PC-9 (cell line): ENCODE measurements at regions of chr11 and their contacts with region 1.

Region 1: GRCh38 chr11:65117216-65118096 is at the start of gene ZNHIT2:
- DNase-seq: peak; percentile 96 to 100
- H3K4me3 ChIP-seq: peak within 1 kb of the TSS; percentile 100
- H3K27ac ChIP-seq: peak within 1 kb of the TSS; percentile 86
- H3K4me1 ChIP-seq: peaks cover 38% of the 10 kb centered on the region
- H3K27me3 ChIP-seq: no peaks in the 10 kb centered on the region
- CTCF ChIP-seq: peak; percentile 98
- total RNA-seq, gene ZNHIT2: 13.7 and 22.3 TPM in 2 replicates

Region 2: DNA sequence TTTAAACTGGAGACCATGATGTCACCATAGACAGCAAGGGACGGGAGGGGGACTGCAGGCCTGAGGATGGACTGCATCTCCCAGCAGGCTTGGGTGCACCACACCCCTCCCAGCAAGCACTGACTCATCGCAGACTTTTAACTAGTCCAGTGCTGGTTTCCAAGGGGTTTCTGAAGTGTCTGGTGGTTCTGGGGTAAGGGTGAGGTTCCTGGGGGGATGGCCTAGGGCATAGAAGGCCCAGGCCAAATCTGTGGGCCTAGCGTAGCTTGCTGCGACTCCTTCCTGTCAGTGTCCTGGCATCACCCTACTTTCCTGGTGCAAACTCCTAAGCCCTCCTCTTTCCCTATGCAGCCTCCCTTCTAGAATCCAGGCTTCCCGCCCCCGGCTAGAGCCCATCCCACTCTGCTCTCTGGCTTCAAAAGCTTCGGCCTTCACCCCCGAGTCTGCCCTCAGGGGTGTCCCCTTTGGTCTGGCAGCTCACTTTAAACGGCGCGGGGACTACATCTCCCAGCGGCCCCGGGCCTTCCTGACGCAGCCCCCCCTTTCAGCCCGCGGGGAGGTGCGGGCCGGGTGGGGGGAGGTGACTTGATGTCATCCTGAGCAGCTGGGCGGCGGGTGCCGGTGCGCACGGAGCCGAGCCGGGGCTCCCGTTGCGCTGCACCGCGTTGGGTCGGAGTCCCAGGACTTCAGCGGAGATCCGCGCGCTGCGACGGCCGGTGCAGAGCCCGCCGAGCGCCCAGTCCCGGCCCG is 193.2 kb before region 1 on chr11 and contains the start of gene PPP2R5B:
- CTCF ChIA-PET with region 1: no interaction called
- POLR2A ChIA-PET with region 1: no interaction called
- intact Hi-C with region 1: loop called (anchors 2 kb)
- DNase-seq: peak; percentile 91
- H3K4me3 ChIP-seq: peak within 1 kb of the TSS; percentile 66
- H3K27ac ChIP-seq: peak within 1 kb of the TSS; percentile 58
- H3K4me1 ChIP-seq: peaks cover 11% of the 10 kb centered on the region
- H3K27me3 ChIP-seq: no peaks in the 10 kb centered on the region
- CTCF ChIP-seq: no peak
- total RNA-seq, gene PPP2R5B: 13.7 and 13.9 TPM in 2 replicates

Region 3: GRCh38 chr11:64971421-64972233 is 145.8 kb before region 1 on chr11 and contains the start of gene MAJIN:
- CTCF ChIA-PET with region 1: interaction called, 13 read pairs
- POLR2A ChIA-PET with region 1: no interaction called
- intact Hi-C with region 1: no loop called
- DNase-seq: peak; percentile 66 to 93
- H3K4me3 ChIP-seq: peak within 1 kb of the TSS; percentile 52; the same call in 1 of the 2 replicates
- H3K27ac ChIP-seq: peak within 1 kb of the TSS; percentile 95
- H3K4me1 ChIP-seq: peaks cover 26% of the 10 kb centered on the region
- H3K27me3 ChIP-seq: 0 out of 2 replicates have a peak, but pooled peaks cover under 1% of the 10 kb centered on the region
- CTCF ChIP-seq: no peak
- total RNA-seq, gene MAJIN: 4.5 and 7.1 TPM in 2 replicates

Region 4: GRCh38 chr11:65013692-65014145 is 103.7 kb before region 1 on chr11:
- CTCF ChIA-PET with region 1: no interaction called
- POLR2A ChIA-PET with region 1: no interaction called
- intact Hi-C with region 1: loop called (anchors 2 kb)
- DNase-seq: peak in 1 of 2 experiments; percentile 80
- H3K4me3 ChIP-seq: peak overlapping the region; percentile 76
- H3K27ac ChIP-seq: peak overlapping the region; percentile 71
- H3K4me1 ChIP-seq: peaks cover 14% of the 10 kb centered on the region
- H3K27me3 ChIP-seq: no peaks in the 10 kb centered on the region
- CTCF ChIP-seq: peak; percentile 75

Region 5: DNA sequence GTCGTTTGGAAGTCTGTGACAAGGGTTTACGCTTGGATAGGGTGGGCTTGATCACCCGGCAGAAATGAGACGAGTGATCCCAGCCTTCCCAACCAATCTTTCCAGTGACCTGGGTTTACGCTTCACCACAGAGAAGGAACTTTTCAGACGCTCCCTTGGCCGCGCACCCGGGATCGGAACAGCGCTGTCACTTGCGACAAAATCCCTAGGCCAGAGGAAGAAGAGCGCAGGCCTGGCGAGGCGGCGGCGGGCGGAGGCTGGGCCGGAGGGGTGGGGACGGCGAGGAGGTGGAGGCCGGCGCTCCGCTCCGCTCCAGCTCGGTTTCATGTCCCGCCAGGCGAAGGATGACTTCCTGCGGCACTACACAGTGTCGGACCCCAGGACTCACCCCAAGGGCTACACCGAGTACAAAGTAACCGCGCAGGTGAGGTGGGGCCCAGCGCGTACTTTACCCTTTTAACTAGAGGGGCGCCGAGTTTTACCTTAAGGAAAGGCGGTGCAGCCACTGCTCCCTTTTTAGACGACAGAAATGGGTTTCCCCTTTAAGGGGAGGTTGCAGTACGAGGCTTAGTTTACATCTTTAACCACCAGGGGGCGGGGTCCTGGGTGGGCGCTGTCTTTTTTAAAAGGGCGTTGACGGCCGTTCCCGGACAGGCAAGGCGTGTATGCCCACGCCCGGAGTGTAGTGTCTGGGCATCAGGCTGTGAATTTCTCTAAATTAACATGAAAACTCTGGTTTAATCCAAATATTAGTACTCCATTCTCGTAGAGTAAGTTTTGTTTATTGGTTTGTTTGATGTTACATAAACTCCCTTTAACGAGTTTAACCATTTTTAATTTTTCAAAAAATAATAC is 90.0 kb before region 1 on chr11 and contains the start of gene SNX15:
- CTCF ChIA-PET with region 1: interaction called, 4 read pairs
- POLR2A ChIA-PET with region 1: no interaction called
- intact Hi-C with region 1: loop called (anchors 2 kb)
- DNase-seq: peak; percentile 90 to 95
- H3K4me3 ChIP-seq: peak within 1 kb of the TSS; percentile 64
- H3K27ac ChIP-seq: peak within 1 kb of the TSS; percentile 36
- H3K4me1 ChIP-seq: peaks cover 9% of the 10 kb centered on the region
- H3K27me3 ChIP-seq: no peaks in the 10 kb centered on the region
- CTCF ChIP-seq: peak; percentile 94
- total RNA-seq, gene SNX15: 38.2 and 40.6 TPM in 2 replicates

Region 6: GRCh38 chr11:65189191-65189590 is 71.7 kb after region 1 on chr11:
- CTCF ChIA-PET with region 1: no interaction called
- POLR2A ChIA-PET with region 1: no interaction called
- intact Hi-C with region 1: no loop called
- DNase-seq: no peak
- H3K4me3 ChIP-seq: no peak overlapping the region
- H3K27ac ChIP-seq: no peak overlapping the region
- H3K4me1 ChIP-seq: peaks cover 10% of the 10 kb centered on the region
- H3K27me3 ChIP-seq: no peaks in the 10 kb centered on the region
- CTCF ChIP-seq: no peak

Region 7: DNA sequence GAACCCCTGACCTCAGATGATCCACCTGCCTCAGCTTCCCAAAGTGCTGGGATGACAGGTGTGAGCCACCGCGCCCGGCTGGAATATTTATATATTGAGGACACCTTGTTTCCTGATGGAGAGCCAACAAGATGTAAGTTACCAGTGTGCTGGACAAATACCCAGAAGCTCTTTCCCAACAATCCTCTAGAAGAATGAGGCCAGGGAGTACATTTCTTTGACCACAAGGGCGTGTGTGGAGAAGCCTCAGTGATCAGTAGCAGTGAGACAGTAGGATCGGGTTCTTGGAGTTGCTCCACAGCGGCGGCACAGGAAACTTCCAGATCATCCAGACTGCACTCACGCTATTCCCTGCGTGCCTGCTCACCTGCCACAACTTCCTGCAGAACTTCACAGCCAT is 134.0 kb after region 1 on chr11:
- CTCF ChIA-PET with region 1: no interaction called
- POLR2A ChIA-PET with region 1: interaction called, 11 read pairs
- intact Hi-C with region 1: no loop called
- DNase-seq: peak in 1 of 2 experiments; percentile 50
- H3K4me3 ChIP-seq: no peak overlapping the region
- H3K27ac ChIP-seq: no peak overlapping the region
- H3K4me1 ChIP-seq: no peaks in the 10 kb centered on the region
- H3K27me3 ChIP-seq: no peaks in the 10 kb centered on the region
- CTCF ChIP-seq: no peak; the same call in 1 of the 2 replicates